Sigmoid colon (tissue), 7 donors: ENCODE measurements at regions of chr3 and their contacts with region 1.

Region 1: DNA sequence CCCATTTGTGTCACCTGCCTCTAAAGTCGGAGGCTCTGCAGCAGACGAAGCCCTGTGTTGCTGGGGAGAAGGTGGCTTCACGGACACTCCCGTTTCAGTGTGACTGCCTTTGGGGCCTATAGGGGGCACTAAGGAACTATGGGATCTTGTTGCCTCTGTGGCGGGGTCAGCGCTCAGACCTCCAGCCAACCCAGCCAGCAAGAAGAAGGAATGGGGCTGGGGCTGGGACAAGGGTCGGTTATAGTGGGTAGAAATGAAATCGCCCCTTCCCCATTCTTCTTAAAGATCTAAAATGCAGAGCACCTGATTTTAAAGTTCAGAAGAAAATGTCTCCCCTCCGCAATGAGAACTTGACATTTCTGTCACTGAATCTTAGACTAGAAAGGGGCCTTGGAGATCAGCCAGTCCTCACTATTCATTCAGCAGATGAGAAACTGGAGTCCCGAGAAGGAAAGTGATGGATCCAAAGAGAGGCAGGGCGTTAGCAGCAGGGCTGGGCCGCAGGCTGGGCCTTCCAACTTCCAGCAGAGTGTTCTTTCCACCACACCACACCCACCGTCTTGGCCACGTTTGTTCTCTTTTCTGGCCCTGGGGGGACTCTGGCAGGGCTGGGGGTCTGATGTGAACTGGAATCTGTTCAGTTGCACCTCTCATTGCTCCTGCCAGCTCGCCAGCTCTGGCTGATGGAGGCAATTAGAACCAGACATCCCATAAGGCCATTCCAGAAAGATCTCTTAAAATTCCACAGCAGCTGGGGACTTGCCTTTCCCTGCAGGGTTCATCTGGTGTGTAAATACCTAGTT is 195.4 kb downstream of the OPA1 start:
- DNase-seq: peak; percentile 84
- H3K4me3 ChIP-seq: no peak overlapping the region
- H3K27ac ChIP-seq: peak overlapping the region; percentile 30 to 61 (median 47)
- H3K4me1 ChIP-seq: peaks cover 3 to 18% (median 11%) of the 10 kb centered on the region in 4 donors
- H3K27me3 ChIP-seq: no peaks in the 10 kb centered on the region
- CTCF ChIP-seq: peak; percentile 25 to 81 (median 74)
- EP300 ChIP-seq: no peak
- POLR2A ChIP-seq: no peak

Region 2: GRCh38 chr3:193960487-193961274 is 172.3 kb after region 1 on chr3:
- intact Hi-C with region 1: loop called (anchors 10 kb)
- DNase-seq: peak; percentile 70
- H3K4me3 ChIP-seq: no peak overlapping the region
- H3K27ac ChIP-seq: peak overlapping the region in 3 of 4 donors; percentile 33 to 59 (median 46)
- H3K4me1 ChIP-seq: peaks cover 0 to 14% (median 13%) of the 10 kb centered on the region in 4 donors
- H3K27me3 ChIP-seq: no peaks in the 10 kb centered on the region
- CTCF ChIP-seq: no peak
- EP300 ChIP-seq: no peak
- POLR2A ChIP-seq: no peak

Region 3: GRCh38 chr3:194418671-194419070 is 630.3 kb after region 1 on chr3:
- intact Hi-C with region 1: no loop called
- DNase-seq: no peak
- H3K4me3 ChIP-seq: no peak overlapping the region
- H3K27ac ChIP-seq: no peak overlapping the region
- H3K4me1 ChIP-seq: no peaks in the 10 kb centered on the region
- H3K27me3 ChIP-seq: no peaks in the 10 kb centered on the region
- CTCF ChIP-seq: no peak
- EP300 ChIP-seq: no peak
- POLR2A ChIP-seq: no peak